BJ (cell line): ENCODE measurements at regions of chr2 and their contacts with region 1.

Region 1: DNA sequence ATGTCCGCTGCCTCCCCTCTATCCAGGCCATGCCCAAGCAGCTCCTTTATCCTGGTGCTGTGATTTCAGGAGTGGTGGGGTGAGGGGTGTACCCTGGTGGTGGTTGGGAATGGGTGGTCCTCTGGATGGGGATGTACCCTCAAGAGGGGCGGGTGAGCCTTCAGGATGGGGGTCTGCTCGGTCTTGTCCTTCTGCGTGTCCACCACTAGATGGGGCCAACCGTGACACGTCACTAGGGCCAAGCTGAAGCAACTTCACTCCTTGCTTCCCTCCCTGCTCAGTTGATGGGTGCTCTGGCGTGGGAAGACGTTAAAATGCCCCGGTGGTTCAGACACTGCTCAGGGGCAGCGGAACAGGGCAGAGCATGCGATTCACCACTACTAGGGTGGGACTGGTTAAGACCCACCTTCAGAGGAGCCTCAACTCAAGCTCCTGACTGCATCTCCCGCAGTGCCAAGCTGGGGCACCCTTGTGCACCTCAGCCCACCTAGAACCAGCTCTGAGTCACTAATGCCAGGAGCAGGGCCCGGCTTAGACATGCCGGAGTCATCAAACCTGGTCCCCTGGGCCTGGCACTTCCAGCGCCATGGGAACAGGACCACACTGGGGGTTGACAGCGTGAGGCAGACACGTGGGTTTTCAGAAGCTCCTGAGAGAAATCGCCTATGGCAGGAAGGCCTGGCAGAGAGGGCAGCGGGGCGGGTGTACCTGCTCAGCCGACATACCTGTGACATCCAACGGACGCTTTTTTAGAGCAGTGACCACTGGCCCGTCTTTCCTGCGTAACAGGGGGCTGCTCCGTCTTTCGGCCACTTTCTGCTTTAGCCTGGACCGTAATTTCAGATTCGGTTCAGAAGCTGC is 256.7 kb downstream of the HDAC4 start:
- DNase-seq: no peak
- H3K4me3 ChIP-seq: no peak overlapping the region
- H3K27me3 ChIP-seq: no peaks in the 10 kb centered on the region
- CTCF ChIP-seq: peak; percentile 78

Region 2: GRCh38 chr2:238895891-238896600 is 248.0 kb before region 1 on chr2:
- CTCF ChIA-PET with region 1: no interaction called
- POLR2A ChIA-PET with region 1: no interaction called
- DNase-seq: peak; percentile 94
- H3K4me3 ChIP-seq: no peak overlapping the region
- H3K27me3 ChIP-seq: no peaks in the 10 kb centered on the region
- CTCF ChIP-seq: no peak

Region 3: GRCh38 chr2:239154971-239155805 is 11.1 kb after region 1 on chr2:
- CTCF ChIA-PET with region 1: interaction called, 14 read pairs
- POLR2A ChIA-PET with region 1: no interaction called
- DNase-seq: no peak
- H3K4me3 ChIP-seq: no peak overlapping the region
- H3K27me3 ChIP-seq: no peaks in the 10 kb centered on the region
- CTCF ChIP-seq: no peak

Region 4: GRCh38 chr2:239223310-239224198 is 79.5 kb after region 1 on chr2:
- CTCF ChIA-PET with region 1: no interaction called
- POLR2A ChIA-PET with region 1: no interaction called
- DNase-seq: no peak
- H3K4me3 ChIP-seq: no peak overlapping the region
- H3K27me3 ChIP-seq: no peaks in the 10 kb centered on the region
- CTCF ChIP-seq: no peak